H1 (cell line): ENCODE measurements at regions of chr11 and their contacts with region 1.

Region 1: GRCh38 chr11:66336234-66337102 is at the start of gene RIN1:
- DNase-seq: peak in 1 of 2 experiments; percentile 77
- H3K4me3 ChIP-seq: peak within 1 kb of the TSS; percentile 1 to 62 (median 48); a peak in 7 of 8 replicates
- H3K27ac ChIP-seq: 0 out of 2 replicates have a peak within 1 kb of the TSS, but pooled peaks have one; percentile 20
- H3K4me1 ChIP-seq: peaks cover 0 to 20% (median 14%) of the 10 kb centered on the region in 4 experiments; a peak in 6 of 7 replicates
- H3K27me3 ChIP-seq: no peaks in the 10 kb centered on the region; a peak in 2 of 7 replicates
- CTCF ChIP-seq: peak in 2 of 3 experiments; percentile 65 to 75; a peak in 3 of 4 replicates
- EP300 ChIP-seq: no peak
- POLR2A ChIP-seq: no peak; a peak in 1 of 3 replicates
- RAD21 ChIP-seq: peak; percentile 70 to 79
- total RNA-seq, gene RIN1: 5.4 and 6.6 TPM in 2 replicates

Region 2: GRCh38 chr11:66317723-66318599 is 18.5 kb before region 1 on chr11:
- CTCF ChIA-PET with region 1: interaction called, 242 read pairs
- POLR2A ChIA-PET with region 1: interaction called, 25 read pairs
- DNase-seq: no peak
- H3K4me3 ChIP-seq: peak overlapping the region in 1 of 4 experiments; percentile 40; a peak in 1 of 8 replicates
- H3K27ac ChIP-seq: peak overlapping the region; percentile 32; the same call in 1 of the 2 replicates
- H3K4me1 ChIP-seq: peaks cover 9 to 28% (median 19%) of the 10 kb centered on the region in 4 experiments
- H3K27me3 ChIP-seq: peaks cover 0 to 5% (median 0%) of the 10 kb centered on the region in 4 experiments; a peak in 3 of 7 replicates
- CTCF ChIP-seq: no peak
- EP300 ChIP-seq: no peak
- POLR2A ChIP-seq: no peak
- RAD21 ChIP-seq: no peak

Region 3: DNA sequence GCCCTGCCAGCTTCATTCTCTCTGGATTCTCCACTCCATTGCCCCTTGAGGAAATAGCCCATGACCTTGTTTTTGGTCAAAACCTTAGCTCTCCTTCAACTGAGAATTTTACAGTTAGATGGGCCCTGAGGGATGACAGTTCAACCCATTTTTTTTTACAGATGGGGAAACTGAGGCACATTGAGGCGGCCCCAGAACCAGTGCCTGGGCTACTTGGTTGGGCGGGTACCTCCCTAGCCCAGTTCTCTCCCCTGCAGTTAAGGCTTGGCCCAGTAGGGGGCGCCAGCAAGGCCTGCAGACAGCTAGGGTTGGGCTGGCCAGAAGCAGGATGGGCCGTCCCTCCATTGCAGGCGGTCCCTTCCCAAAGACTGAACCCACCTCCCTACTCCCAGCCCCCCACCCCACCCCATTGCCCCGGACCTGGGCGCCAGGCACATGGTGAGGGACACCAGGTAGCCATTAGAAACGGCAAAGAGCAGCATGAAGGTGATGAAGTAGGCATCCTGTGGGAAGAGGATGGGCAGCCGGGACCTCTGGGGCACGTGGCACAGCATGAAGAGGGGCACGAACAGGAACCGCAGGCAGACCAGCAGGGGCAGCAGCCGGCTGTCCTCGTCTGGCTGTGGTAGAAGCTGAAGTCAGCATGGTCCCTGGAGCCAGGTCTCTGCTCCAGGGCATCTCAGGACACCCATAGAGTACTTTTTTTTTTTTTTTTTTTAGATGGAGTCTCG is 27.5 kb after region 1 on chr11:
- CTCF ChIA-PET with region 1: interaction called, 13 read pairs
- POLR2A ChIA-PET with region 1: interaction called, 487 read pairs
- DNase-seq: peak; percentile 77 to 99
- H3K4me3 ChIP-seq: no peak overlapping the region
- H3K27ac ChIP-seq: no peak overlapping the region
- H3K4me1 ChIP-seq: peaks cover 0 to 3% (median 0%) of the 10 kb centered on the region in 4 experiments; a peak in 2 of 7 replicates
- H3K27me3 ChIP-seq: no peaks in the 10 kb centered on the region
- CTCF ChIP-seq: peak; percentile 81 to 98 (median 88)
- EP300 ChIP-seq: no peak; a peak in 1 of 3 replicates
- POLR2A ChIP-seq: no peak; a peak in 1 of 3 replicates
- RAD21 ChIP-seq: peak; percentile 32 to 52; a peak in 3 of 4 replicates